ENCODE measurements at regions of chr5 and their contacts with region 1.

Region 1: GRCh38 chr5:154189819-154190594 is 526 bp upstream of the GALNT10 start:
- DNase-seq: peak; percentile 81
- ATAC-seq: peak; percentile 61
- H3K4me3 Mint-ChIP-seq: peak overlapping the region; percentile 73
- H3K27ac Mint-ChIP-seq: no peak overlapping the region
- H3K4me1 Mint-ChIP-seq: peaks cover 50% of the 10 kb centered on the region
- H3K27me3 Mint-ChIP-seq: peaks cover 52% of the 10 kb centered on the region
- CTCF ChIP-seq: no peak

Region 2: GRCh38 chr5:154047324-154047723 is 142.7 kb before region 1 on chr5:
- CTCF ChIA-PET with region 1: no interaction called
- POLR2A ChIA-PET with region 1: no interaction called
- DNase-seq: no peak
- ATAC-seq: no peak
- H3K4me3 Mint-ChIP-seq: no peak overlapping the region
- H3K27ac Mint-ChIP-seq: no peak overlapping the region
- H3K4me1 Mint-ChIP-seq: no peaks in the 10 kb centered on the region
- H3K27me3 Mint-ChIP-seq: no peaks in the 10 kb centered on the region
- CTCF ChIP-seq: no peak

Region 3: DNA sequence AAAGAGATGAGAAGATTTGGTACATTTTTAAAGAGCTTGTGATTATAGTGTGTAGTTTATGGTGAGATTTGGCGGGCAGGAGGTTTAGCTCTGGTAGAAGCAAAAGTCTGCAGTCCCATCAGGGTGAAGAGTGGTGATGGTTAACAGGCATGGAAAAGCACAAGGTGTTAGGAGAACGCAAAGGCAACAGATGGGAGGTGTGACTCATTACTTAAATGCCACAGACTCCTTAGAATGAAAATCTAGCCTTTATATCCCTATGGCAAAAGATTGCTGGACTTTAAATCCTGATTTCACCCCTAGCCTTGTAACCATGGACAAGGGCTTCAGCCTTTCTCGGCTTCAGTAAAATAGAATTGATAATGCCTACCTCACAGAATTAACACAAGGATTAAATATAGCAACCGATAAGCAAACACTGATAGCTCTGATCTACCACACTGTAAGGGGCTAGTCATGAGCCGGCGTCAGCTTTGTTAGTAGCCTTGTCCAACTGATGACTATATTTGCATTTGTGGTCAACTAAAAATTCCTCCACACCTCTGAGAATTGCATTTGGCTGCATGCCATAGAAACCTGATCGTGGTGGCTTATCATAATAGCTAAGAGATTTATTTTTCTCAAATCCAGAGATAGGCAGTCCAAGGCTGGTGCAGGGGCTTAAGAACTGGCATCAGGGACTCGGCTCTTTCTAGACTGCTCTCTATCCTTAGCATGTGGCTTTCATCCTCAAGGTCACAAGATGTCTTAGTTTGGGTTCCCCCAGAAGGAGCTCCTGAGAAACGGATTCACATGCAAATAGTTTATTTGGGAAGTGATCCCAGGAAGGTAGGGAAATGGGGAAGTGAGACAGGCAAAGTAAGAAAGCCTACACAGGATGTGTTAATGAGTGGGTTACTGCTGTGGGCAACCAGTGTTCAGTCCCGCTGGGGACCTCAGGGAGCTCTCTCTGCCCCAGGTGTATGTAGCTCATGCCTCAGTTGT is 131.7 kb before region 1 on chr5:
- CTCF ChIA-PET with region 1: interaction called, 11 read pairs
- POLR2A ChIA-PET with region 1: no interaction called
- DNase-seq: no peak
- ATAC-seq: peak; percentile 63
- H3K4me3 Mint-ChIP-seq: no peak overlapping the region
- H3K27ac Mint-ChIP-seq: no peak overlapping the region
- H3K4me1 Mint-ChIP-seq: peaks cover 18% of the 10 kb centered on the region
- H3K27me3 Mint-ChIP-seq: peaks cover 3% of the 10 kb centered on the region; the same call in 1 of the 2 replicates
- CTCF ChIP-seq: no peak

Region 4: DNA sequence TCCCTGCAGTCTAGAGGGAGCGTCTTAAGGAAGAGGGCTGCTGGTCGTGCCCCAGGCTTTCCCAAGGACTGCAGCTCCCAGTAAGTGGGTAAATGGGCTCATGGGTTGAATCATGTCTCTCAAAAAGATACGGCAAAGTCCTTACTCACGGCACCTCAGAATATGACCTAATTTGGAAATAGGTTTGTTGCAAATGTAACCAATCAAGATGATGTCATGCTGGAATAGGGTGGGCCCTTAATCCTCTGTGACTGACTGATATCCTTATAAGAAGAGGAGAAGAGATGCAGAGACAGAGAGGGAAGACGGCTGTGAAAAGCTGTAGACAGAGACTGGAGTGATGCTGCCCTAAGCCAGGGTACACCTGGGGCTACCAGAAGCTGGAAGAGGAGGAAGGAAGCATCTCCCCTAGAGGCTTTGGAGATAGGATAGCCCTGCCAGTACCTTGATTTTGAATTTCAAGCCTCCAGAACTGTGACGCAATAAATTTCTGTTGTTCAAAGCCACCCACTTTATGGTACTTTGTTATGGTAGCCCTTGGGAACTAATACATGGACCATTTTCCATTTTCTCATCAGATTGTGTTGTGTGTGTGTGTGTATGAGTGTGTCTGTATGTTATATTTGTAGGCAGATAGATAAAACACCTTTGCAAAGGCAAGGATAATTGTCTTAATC is 15.6 kb after region 1 on chr5:
- CTCF ChIA-PET with region 1: interaction called, 10 read pairs
- POLR2A ChIA-PET with region 1: no interaction called
- DNase-seq: no peak
- ATAC-seq: no peak
- H3K4me3 Mint-ChIP-seq: no peak overlapping the region
- H3K27ac Mint-ChIP-seq: no peak overlapping the region
- H3K4me1 Mint-ChIP-seq: peaks cover 68% of the 10 kb centered on the region
- H3K27me3 Mint-ChIP-seq: no peaks in the 10 kb centered on the region
- CTCF ChIP-seq: no peak

Region 5: DNA sequence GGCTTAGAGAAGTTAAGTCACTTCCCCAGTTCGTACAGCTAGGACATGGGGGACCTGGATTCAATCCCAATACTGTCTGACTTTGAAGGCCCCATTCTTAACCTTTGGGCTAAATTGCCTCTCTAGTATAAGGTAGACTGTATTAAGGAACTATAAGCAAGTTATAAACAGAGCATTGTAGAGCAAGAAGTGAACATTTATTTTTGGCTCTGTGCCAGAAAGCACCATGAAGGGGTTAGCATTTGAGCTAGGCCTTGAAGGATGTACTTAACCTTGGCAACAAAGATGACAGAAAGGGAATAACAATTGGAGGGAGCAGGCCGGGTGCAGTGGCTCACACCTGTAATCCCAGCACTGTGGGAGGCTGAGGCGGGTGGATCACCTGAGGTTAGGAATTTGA is 33.3 kb after region 1 on chr5:
- CTCF ChIA-PET with region 1: no interaction called
- POLR2A ChIA-PET with region 1: no interaction called
- DNase-seq: no peak
- ATAC-seq: no peak
- H3K4me3 Mint-ChIP-seq: no peak overlapping the region
- H3K27ac Mint-ChIP-seq: no peak overlapping the region
- H3K4me1 Mint-ChIP-seq: peaks cover 51% of the 10 kb centered on the region
- H3K27me3 Mint-ChIP-seq: no peaks in the 10 kb centered on the region
- CTCF ChIP-seq: no peak

Region 6: GRCh38 chr5:154238776-154239481 is 48.9 kb after region 1 on chr5:
- CTCF ChIA-PET with region 1: no interaction called
- POLR2A ChIA-PET with region 1: no interaction called
- DNase-seq: peak; percentile 53
- ATAC-seq: peak; percentile 38; the same call in 1 of the 2 replicates
- H3K4me3 Mint-ChIP-seq: no peak overlapping the region
- H3K27ac Mint-ChIP-seq: no peak overlapping the region
- H3K4me1 Mint-ChIP-seq: peaks cover 39% of the 10 kb centered on the region
- H3K27me3 Mint-ChIP-seq: no peaks in the 10 kb centered on the region
- CTCF ChIP-seq: no peak

Region 7: DNA sequence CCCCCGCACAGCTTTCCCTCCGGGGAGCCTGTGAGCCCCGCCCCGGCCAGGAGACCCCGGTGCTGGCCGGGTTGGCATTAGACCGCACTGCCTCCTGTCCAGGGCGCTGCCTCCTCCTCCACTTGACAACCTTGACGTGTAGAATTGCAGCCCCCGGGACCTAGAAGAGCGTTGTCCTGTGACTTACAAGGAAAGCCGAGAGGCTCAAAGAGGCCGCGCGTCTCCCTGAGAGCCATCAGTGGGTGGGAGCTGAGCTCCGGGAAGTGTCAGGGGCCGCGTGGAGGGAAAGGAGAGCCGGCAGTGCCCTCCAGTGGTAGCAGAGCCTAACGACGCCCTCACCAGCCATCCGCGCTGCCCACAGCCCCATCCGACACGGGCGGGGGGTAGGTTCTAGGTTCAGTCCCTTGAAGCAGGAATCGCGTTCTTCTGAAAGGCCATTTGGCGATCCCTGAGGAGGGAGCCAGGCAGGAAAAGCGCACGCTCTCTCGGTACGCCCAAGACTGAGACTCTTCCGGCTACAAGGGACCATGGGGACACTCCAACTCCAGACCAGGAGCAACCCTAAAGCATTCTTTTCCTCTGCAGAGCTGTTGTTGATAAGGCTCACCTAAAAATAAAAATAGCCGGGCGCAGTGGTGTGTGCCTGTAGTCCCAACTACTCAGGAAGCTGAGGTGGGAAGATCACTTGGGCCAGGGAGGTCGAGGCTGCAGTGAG is 215.2 kb after region 1 on chr5:
- CTCF ChIA-PET with region 1: interaction called, 31 read pairs
- POLR2A ChIA-PET with region 1: no interaction called
- DNase-seq: peak; percentile 86
- ATAC-seq: peak; percentile 93
- H3K4me3 Mint-ChIP-seq: peak overlapping the region; percentile 57
- H3K27ac Mint-ChIP-seq: no peak overlapping the region
- H3K4me1 Mint-ChIP-seq: peaks cover 13% of the 10 kb centered on the region
- H3K27me3 Mint-ChIP-seq: no peaks in the 10 kb centered on the region; the same call in 1 of the 2 replicates
- CTCF ChIP-seq: peak; percentile 86